ENCODE measurements at regions of chr6 and their contacts with region 1.

Region 1: DNA sequence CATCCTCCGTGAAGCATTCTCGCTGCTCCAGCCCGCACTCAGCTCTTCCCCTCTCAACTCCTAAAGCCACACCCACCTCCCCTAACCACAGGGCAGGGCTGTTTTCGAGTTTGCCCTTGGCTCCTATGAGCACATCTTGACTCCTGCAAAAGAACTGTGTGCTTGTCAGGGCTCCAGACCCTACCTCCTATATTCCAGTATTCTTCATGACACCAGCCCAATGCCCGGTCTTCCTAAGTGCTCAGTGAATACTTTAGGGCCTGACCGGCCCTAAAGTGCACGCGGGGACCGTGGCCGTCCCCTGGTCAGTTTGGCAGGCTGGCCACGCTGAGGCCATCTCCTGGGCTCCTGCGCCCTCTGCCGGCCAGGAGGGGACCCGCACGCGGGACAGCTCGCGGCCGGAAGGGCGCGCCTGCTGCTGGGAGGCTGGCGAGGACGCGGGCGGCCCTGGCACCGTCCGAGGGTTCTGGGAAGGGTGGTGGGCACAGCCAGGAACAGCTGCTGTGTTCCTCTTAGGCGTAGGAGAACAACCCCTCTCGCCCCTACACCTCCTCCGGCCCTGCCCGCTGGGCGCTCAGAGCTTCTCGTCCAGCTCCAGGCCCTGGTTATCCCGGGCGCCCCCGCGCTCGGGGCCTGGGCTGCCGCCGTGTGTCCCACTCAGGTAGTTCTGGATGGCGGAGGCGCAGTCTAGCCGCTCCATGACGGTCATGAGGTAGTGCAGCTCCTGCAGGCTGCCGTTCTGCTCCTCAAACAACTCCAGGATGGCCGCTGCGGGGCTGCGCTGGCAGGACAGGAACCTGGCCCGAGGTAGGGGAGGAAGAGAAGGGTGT is 11.0 kb downstream of the UNC5CL start:
- DNase-seq: peak; percentile 94
- H3K4me3 ChIP-seq: peak overlapping the region; percentile 59 to 62 (median 60)
- H3K27ac ChIP-seq: peak overlapping the region; percentile 46 to 79 (median 71)
- H3K4me1 ChIP-seq: peaks cover 12 to 23% (median 19%) of the 10 kb centered on the region in 4 donors
- H3K27me3 ChIP-seq: no peaks in the 10 kb centered on the region
- CTCF ChIP-seq: peak; percentile 97 to 100 (median 99)
- EP300 ChIP-seq: no peak
- POLR2A ChIP-seq: no peak

Region 2: GRCh38 chr6:39347906-39348585 is 1680.0 kb before region 1 on chr6:
- intact Hi-C with region 1: loop called (anchors 10 kb)
- DNase-seq: peak; percentile 93
- H3K4me3 ChIP-seq: no peak overlapping the region
- H3K27ac ChIP-seq: no peak overlapping the region
- H3K4me1 ChIP-seq: peaks cover 0 to 3% (median 2%) of the 10 kb centered on the region in 4 donors
- H3K27me3 ChIP-seq: no peaks in the 10 kb centered on the region
- CTCF ChIP-seq: peak; percentile 87 to 93 (median 90)
- EP300 ChIP-seq: no peak
- POLR2A ChIP-seq: no peak

Region 3: GRCh38 chr6:39980839-39981580 is 1047.0 kb before region 1 on chr6:
- intact Hi-C with region 1: loop called (anchors 10 kb)
- DNase-seq: peak; percentile 64
- H3K4me3 ChIP-seq: no peak overlapping the region
- H3K27ac ChIP-seq: peak overlapping the region in 3 of 4 donors; percentile 34 to 47 (median 39)
- H3K4me1 ChIP-seq: peaks cover 8 to 27% (median 20%) of the 10 kb centered on the region in 4 donors
- H3K27me3 ChIP-seq: no peaks in the 10 kb centered on the region
- CTCF ChIP-seq: peak; percentile 55 to 65 (median 59)
- EP300 ChIP-seq: no peak
- POLR2A ChIP-seq: no peak

Region 4: GRCh38 chr6:41066867-41067304 is 38.9 kb after region 1 on chr6:
- intact Hi-C with region 1: loop called (anchors 5 kb)
- DNase-seq: no peak
- H3K4me3 ChIP-seq: no peak overlapping the region
- H3K27ac ChIP-seq: peak overlapping the region in 1 of 4 donors; percentile 13
- H3K4me1 ChIP-seq: peaks cover 11 to 32% (median 23%) of the 10 kb centered on the region in 4 donors
- H3K27me3 ChIP-seq: no peaks in the 10 kb centered on the region
- CTCF ChIP-seq: peak; percentile 77 to 84 (median 83)
- EP300 ChIP-seq: no peak
- POLR2A ChIP-seq: no peak

Measured in esophagus muscularis mucosa (tissue), 4 donors.